ENCODE measurements at regions of chr12 and their contacts with region 1.

Region 1: DNA sequence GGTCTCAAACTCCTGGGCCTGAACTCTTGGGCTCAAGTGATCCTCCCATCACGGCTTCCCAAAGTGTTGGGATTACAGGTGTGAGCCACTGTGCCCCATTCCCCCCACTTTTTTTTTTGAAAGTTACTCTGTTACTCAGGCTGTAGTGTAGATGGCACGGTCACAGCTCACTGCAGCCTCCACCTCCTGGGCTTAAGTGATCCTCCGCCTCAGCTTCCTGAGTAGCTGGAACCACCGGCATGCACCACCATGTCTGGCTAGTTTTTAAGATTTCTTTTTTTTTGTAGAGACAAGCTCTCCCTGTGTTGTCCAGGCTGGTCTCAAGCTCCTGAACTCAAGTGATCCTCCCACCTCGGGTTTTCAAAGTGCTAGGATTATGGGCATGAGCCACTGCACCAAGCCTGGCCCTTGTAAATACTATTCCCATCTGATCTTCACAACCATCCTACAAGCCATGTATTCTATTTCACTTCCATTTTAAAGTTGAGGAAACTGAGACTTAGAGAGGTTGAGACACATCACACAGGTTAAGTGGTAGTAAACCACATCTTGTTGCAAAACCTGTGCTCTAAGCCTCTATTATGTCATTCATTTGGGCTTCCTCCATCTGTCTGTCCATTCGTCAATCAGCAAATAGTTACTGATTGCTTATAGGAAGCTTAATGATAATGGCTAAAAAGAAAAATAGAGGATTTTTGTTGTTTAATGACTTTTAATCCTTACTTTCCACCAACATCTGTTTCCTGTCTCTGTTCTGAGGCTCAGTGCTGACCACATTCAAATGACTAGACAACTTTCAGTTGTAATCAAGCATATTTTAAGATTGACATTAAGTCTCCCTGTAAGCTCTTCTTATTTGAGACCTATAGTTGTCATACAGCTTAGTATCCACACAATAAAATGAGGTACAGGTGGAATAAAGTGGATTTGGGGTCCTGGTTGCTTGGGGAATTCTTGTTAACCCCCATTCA is 9.2 kb downstream of the ASCL4 start:
- DNase-seq: no peak
- ATAC-seq: peak; percentile 69
- H3K4me3 ChIP-seq: peak overlapping the region; percentile 28; the same call in 1 of the 2 replicates
- H3K27ac ChIP-seq: no peak overlapping the region
- H3K4me1 ChIP-seq: peaks cover 39% of the 10 kb centered on the region
- H3K27me3 ChIP-seq: no peaks in the 10 kb centered on the region; a peak in 1 of 4 replicates
- CTCF ChIP-seq: no peak
- EP300 ChIP-seq: no peak
- POLR2A ChIP-seq: no peak
- RAD21 ChIP-seq: no peak

Region 2: GRCh38 chr12:107832441-107832840 is 48.8 kb after region 1 on chr12:
- CTCF ChIA-PET with region 1: no interaction called
- POLR2A ChIA-PET with region 1: no interaction called
- RAD21 ChIA-PET with region 1: no interaction called
- SMC1A ChIA-PET with region 1: no interaction called
- in situ Hi-C with region 1: no loop called
- intact Hi-C with region 1: loop called (anchors 5 kb)
- DNase-seq: no peak
- ATAC-seq: no peak
- H3K4me3 ChIP-seq: no peak overlapping the region
- H3K27ac ChIP-seq: no peak overlapping the region
- H3K4me1 ChIP-seq: no peaks in the 10 kb centered on the region
- H3K27me3 ChIP-seq: no peaks in the 10 kb centered on the region
- CTCF ChIP-seq: no peak
- EP300 ChIP-seq: no peak
- POLR2A ChIP-seq: no peak
- RAD21 ChIP-seq: no peak

Measured in GM12878 (cell line).